ENCODE measurements at regions of chr14 and their contacts with region 1.

Region 1: DNA sequence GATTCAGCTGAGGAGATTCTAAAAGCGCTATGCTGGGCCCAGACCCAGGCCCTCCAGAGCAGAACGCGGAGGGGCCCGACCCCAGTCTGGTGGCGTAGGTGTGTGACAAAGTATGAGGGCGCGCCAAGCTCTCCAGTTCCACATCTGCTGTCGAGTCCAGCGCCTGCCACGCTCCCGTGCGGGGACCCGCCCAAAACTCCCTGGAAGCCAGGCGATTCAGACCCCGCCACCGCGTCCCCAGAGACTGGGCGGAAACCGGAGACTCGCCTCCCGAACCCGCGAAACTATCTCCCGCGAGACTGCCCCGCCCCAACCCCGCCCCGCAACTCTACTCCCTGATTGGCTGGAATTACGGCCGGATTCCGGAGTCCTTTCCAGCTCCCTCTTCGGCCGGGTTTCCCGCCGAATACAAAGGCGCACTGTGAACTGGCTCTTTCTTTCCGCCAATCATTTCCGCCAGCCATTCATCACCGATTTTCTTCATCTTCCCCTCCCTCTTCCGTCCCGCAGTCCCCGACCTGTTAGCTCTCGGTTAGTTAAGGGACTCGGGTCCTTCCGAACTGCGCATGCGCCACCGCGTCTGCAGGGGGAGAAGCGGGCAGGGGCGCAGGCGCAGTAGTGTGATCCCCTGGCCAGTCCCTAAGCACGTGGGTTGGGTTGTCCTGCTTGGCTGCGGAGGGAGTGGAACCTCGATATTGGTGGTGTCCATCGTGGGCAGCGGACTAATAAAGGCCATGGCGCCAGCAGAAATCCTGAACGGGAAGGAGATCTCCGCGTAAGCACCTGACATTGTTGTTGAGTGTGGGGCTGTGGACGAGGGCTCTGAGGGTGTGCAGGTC is at the start of gene MTHFD1:
- DNase-seq: peak; percentile 98
- H3K4me3 Mint-ChIP-seq: peak within 1 kb of the TSS; percentile 85
- H3K27ac Mint-ChIP-seq: peak within 1 kb of the TSS; percentile 87
- H3K4me1 Mint-ChIP-seq: peaks cover 42% of the 10 kb centered on the region
- H3K27me3 Mint-ChIP-seq: no peaks in the 10 kb centered on the region
- total RNA-seq, gene MTHFD1: 142 to 147 TPM

Region 2: DNA sequence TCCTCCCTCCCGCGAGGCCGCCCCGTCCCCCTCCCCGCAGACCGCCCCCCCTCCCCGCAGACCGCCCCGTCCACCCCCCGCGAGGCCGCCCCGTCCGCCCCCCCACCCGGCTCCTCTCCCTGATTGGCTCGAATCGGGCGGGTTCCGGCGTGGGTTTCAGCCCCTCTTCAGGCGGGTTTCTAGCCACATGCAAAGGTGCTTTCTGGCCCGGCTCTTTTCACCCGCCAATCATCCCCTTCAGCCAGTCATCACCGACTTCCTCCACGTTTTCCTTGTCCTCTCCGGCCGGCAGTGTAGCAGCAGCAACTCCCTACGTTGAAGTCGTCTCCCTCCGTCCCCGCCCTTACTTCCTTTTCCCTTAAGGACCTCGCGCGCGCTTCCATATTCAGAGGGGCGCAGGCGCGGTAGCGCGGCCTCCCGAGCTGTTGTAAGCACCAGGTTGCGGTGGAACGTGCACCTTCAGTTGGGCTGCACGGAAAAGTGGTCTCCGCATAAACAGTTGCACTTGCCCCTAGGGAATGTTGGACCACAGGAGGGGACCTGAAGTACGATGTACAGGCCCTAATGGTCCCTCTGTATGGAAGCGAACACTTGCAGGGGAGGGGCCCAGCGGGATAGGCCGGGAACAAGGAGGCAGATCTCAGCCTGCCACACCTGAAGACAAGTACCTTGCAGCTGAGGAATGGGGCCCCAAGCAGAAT is 49.1 kb before region 1 on chr14:
- CTCF ChIA-PET with region 1: interaction called, 11 read pairs
- POLR2A ChIA-PET with region 1: interaction called, 53 read pairs
- DNase-seq: peak; percentile 91
- H3K4me3 Mint-ChIP-seq: peak overlapping the region; percentile 77
- H3K27ac Mint-ChIP-seq: peak overlapping the region; percentile 80
- H3K4me1 Mint-ChIP-seq: peaks cover 33% of the 10 kb centered on the region
- H3K27me3 Mint-ChIP-seq: no peaks in the 10 kb centered on the region

Region 3: GRCh38 chr14:64400829-64401459 is 13.0 kb after region 1 on chr14:
- CTCF ChIA-PET with region 1: interaction called, 5 read pairs
- POLR2A ChIA-PET with region 1: interaction called, 36 read pairs
- DNase-seq: no peak
- H3K4me3 Mint-ChIP-seq: no peak overlapping the region
- H3K27ac Mint-ChIP-seq: no peak overlapping the region
- H3K4me1 Mint-ChIP-seq: peaks cover 14% of the 10 kb centered on the region
- H3K27me3 Mint-ChIP-seq: no peaks in the 10 kb centered on the region

Region 4: GRCh38 chr14:64434528-64434927 is 46.6 kb after region 1 on chr14:
- CTCF ChIA-PET with region 1: interaction called, 14 read pairs
- POLR2A ChIA-PET with region 1: interaction called, 7 read pairs
- DNase-seq: no peak
- H3K4me3 Mint-ChIP-seq: no peak overlapping the region
- H3K27ac Mint-ChIP-seq: no peak overlapping the region
- H3K4me1 Mint-ChIP-seq: peaks cover 18% of the 10 kb centered on the region
- H3K27me3 Mint-ChIP-seq: no peaks in the 10 kb centered on the region

Region 5: DNA sequence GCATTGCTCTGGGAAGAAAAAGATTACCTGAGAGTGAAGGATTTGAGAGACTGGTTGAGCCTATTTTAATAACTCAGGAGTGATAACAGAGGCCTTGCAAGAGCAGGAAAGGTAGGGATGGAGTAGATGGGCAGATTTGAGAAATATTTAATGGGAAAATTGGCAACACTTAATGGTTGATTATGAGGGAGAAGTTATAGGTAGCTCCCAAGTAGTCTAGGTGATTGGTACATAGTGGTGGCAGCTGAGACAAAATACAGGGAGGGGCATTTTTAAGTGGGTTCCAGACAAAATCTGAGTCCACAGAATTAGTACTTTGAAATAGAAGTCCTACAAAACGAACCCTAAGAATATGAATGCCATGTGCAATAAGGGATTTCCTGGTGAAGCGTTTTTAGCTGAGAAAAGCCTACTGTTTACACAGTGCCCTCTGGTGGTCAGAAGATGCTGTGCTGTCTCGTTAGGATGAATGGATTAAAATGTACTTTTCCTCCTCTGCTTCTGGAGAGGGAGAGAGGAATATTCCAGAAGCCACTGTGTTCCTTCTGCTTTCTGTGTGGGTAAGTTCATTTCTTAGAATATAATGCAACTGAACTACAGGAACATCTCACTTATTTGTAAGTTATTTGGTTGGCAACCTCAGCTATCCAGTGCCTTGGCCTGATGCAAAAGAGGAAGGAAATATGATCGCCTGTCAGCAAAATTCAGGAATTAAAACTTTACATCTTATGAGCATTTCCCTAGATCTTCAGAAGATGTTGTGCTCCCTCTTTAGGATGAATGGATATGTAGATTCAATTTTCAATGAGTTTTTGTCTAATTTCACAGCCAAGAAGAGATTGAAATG is 123.1 kb after region 1 on chr14:
- CTCF ChIA-PET with region 1: interaction called, 3 read pairs
- POLR2A ChIA-PET with region 1: interaction called, 75 read pairs
- DNase-seq: peak; percentile 69
- H3K4me3 Mint-ChIP-seq: peak overlapping the region; percentile 52
- H3K27ac Mint-ChIP-seq: peak overlapping the region; percentile 58
- H3K4me1 Mint-ChIP-seq: peaks cover 69% of the 10 kb centered on the region
- H3K27me3 Mint-ChIP-seq: no peaks in the 10 kb centered on the region

Region 6: GRCh38 chr14:64952598-64953309 is 564.8 kb after region 1 on chr14:
- CTCF ChIA-PET with region 1: no interaction called
- POLR2A ChIA-PET with region 1: no interaction called
- DNase-seq: no peak
- H3K4me3 Mint-ChIP-seq: no peak overlapping the region
- H3K27ac Mint-ChIP-seq: no peak overlapping the region
- H3K4me1 Mint-ChIP-seq: no peaks in the 10 kb centered on the region
- H3K27me3 Mint-ChIP-seq: no peaks in the 10 kb centered on the region

Measured in activated CD4-positive, alpha-beta memory T cell treated with anti-CD3 and anti-CD28 coated beads, Interleukin-2, amount 10 ng/mL, durations not matched to agents 7 days and 5 days (primary cell).